Heart left ventricle (tissue), 16 donors: ENCODE measurements at regions of chr7 and their contacts with region 1.

Region 1: GRCh38 chr7:113705439-113705838 is 213.4 kb downstream of the PPP1R3A start:
- DNase-seq: no peak
- ATAC-seq: no peak
- H3K4me3 ChIP-seq: no peak overlapping the region
- H3K27ac ChIP-seq: no peak overlapping the region
- H3K4me1 ChIP-seq: no peaks in the 10 kb centered on the region
- H3K27me3 ChIP-seq: no peaks in the 10 kb centered on the region
- CTCF ChIP-seq: no peak
- POLR2A ChIP-seq: no peak

Region 2: DNA sequence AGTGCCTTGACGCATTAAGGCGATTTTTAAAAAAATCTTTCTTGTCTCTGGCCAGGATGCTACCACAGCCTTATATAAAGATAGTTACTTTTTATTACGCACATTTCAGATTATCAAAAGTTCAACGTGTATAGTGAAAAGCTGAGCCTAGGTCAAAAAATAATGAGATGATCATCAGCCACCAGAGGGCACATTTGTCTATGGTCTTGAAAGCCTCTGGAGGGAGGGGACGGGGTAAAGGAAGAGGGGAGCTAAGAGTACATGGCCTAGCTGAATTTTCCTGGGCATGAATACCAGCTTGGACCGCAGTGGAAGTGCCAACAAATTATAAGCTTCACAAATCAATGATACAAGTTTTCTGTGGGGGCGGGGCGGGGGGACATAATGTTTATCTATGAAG is 301.2 kb before region 1 on chr7:
- intact Hi-C with region 1: loop called in 1 of 10 experiments (anchors 10 kb)
- DNase-seq: no peak
- ATAC-seq: peak in 2 of 4 donors; percentile 46 to 57
- H3K4me3 ChIP-seq: no peak overlapping the region
- H3K27ac ChIP-seq: no peak overlapping the region
- H3K4me1 ChIP-seq: no peaks in the 10 kb centered on the region
- H3K27me3 ChIP-seq: no peaks in the 10 kb centered on the region
- CTCF ChIP-seq: peak in 8 of 12 donors; percentile 3 to 38 (median 26)
- POLR2A ChIP-seq: no peak

Region 3: GRCh38 chr7:114152314-114152938 is 447.0 kb after region 1 on chr7:
- intact Hi-C with region 1: no loop called
- DNase-seq: no peak
- ATAC-seq: no peak
- H3K4me3 ChIP-seq: no peak overlapping the region
- H3K27ac ChIP-seq: no peak overlapping the region
- H3K4me1 ChIP-seq: no peaks in the 10 kb centered on the region
- H3K27me3 ChIP-seq: no peaks in the 10 kb centered on the region
- CTCF ChIP-seq: no peak
- POLR2A ChIP-seq: no peak